Left cardiac atrium (tissue), 4 donors: ENCODE measurements at regions of chr20 and their contacts with region 1.

Region 1: DNA sequence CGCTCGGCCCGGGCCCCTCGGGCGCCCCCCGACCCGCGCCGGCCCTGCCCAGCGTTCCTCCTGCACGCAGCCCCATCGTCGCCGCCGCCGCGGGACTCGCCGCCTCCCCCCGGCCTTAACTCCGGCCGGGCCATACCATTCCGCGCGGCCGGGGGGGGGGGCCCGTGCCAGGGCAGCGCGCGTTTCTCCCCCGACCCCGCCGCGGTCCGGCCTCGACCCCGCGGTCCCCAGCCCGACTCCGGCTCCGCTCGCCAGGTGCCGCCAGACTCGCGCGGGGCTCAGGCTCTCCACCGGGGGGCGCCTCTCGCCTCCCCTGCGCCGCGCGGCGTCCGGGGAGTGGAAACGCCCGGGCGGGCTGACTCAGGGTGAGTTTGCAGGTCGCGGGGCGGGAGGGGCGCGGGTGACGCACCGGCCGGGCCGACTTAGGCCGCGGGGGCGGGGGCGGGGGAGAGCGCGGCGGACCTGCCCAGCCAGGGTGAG is at the start of gene SRXN1:
- DNase-seq: peak; percentile 94
- ATAC-seq: peak; percentile 96 to 97
- total RNA-seq, gene SRXN1: 34.1 to 38.9 TPM

Region 2: GRCh38 chr20:462199-462991 is 190.8 kb before region 1 on chr20 and contains the start of gene TBC1D20:
- intact Hi-C with region 1: no loop called
- DNase-seq: peak; percentile 89
- ATAC-seq: peak; percentile 98
- total RNA-seq, gene TBC1D20: 23.7 to 24.3 TPM

Region 3: GRCh38 chr20:549722-550496 is 103.2 kb before region 1 on chr20:
- intact Hi-C with region 1: no loop called
- DNase-seq: no peak
- ATAC-seq: no peak

Region 4: DNA sequence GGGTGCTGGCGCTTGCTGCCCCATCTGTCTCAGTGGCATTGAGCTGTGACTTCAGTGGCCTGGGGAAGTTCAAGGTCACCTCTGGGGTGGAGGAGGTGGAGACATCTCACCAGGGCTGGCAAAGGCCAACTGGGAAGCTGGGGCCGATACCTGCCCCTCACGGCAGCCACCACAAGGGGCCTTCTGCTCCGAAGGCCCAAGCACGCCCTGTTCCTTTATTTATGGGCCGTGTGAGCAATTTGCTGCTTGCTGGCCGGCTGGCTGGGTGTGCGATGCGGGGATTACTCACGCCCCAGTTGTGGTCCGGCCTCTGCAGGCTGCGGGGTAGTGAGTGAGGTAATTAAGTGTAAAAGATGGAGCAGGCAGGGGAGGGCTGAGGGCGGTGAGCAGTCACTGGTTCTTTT is 35.7 kb after region 1 on chr20:
- intact Hi-C with region 1: no loop called
- DNase-seq: no peak
- ATAC-seq: peak in 1 of 2 donors; percentile 29

Region 5: DNA sequence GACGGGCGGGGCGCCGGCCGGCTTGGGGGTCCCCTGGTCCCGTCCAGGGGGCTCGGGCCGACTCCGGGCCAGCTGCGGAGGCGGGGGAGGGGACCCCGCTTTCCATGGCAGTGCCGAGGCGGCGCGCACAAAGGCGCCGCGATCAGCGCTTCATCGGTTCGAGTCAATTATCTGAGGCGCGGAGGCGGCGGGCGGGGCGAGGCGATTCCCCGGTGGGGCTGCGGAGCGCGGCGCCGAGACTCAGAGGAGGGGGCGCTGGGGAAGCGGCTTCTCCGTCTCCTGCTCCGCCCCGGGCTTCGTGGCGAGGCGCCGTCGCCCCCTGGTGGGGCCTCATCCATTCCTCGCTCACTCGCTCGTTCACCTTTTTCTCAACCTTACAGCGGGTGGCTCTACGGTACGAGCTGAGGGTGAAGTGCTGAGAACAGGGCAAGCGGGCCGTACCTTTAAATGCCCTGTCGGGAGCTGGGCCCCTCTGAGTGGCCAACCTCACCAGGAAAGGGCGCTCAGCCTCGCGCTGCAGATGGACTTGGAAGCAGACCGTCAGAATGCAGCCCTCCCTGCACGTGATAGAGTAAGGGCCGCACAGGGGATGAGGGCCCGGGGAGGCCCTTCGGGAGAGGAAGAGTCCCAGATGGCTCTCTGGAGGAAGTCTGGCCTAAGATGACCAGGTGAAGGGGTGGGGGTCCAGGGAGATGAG is 75.2 kb after region 1 on chr20:
- intact Hi-C with region 1: loop called in 1 of 2 experiments (anchors 5 kb)
- DNase-seq: peak; percentile 46
- ATAC-seq: peak; percentile 88 to 89